H1 (cell line): ENCODE measurements at regions of chr2 and their contacts with region 1.

Region 1: GRCh38 chr2:191013932-191014652 is at the start of gene STAT1:
- DNase-seq: peak in 1 of 2 experiments; percentile 99
- H3K4me3 ChIP-seq: peak within 1 kb of the TSS; percentile 77 to 96 (median 90)
- H3K27ac ChIP-seq: peak within 1 kb of the TSS; percentile 61; the same call in 1 of the 2 replicates
- H3K4me1 ChIP-seq: peaks cover 0 to 6% (median 1%) of the 10 kb centered on the region in 4 experiments; a peak in 3 of 7 replicates
- H3K27me3 ChIP-seq: peaks cover 0 to 13% (median 6%) of the 10 kb centered on the region in 4 experiments; a peak in 4 of 7 replicates
- CTCF ChIP-seq: no peak
- EP300 ChIP-seq: peak; percentile 93 to 100; a peak in 2 of 3 replicates
- POLR2A ChIP-seq: peak; percentile 86 to 98
- RAD21 ChIP-seq: no peak; a peak in 1 of 4 replicates
- total RNA-seq, gene STAT1: 43.0 and 43.8 TPM in 2 replicates

Region 2: DNA sequence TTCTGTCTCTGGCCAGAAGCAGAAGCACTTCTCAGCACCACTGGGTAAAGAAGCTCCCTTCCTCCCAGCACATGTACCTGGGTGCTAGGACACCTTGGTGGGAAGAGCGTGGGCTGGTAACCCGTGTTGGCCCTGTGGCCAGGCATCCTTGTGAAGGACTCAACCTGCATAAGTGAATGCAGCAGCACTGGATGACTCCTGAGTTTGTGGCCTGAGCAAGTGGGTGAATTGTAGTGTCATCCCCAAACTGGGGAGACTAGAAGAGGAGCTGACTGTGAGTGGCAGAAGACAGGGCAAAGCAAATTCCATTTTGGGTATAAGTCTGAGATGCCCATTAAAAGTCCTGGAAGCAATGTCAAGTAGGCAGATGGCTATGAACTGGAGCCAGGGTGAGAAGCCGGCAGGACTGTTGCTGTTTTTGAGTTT is 63.5 kb before region 1 on chr2:
- CTCF ChIA-PET with region 1: no interaction called
- POLR2A ChIA-PET with region 1: no interaction called
- DNase-seq: no peak
- H3K4me3 ChIP-seq: no peak overlapping the region
- H3K27ac ChIP-seq: no peak overlapping the region
- H3K4me1 ChIP-seq: peaks cover 0 to 3% (median 1%) of the 10 kb centered on the region in 4 experiments; a peak in 2 of 7 replicates
- H3K27me3 ChIP-seq: peaks cover 0 to 1% (median 0%) of the 10 kb centered on the region in 4 experiments; a peak in 1 of 7 replicates
- CTCF ChIP-seq: no peak
- EP300 ChIP-seq: no peak
- POLR2A ChIP-seq: no peak
- RAD21 ChIP-seq: no peak

Region 3: DNA sequence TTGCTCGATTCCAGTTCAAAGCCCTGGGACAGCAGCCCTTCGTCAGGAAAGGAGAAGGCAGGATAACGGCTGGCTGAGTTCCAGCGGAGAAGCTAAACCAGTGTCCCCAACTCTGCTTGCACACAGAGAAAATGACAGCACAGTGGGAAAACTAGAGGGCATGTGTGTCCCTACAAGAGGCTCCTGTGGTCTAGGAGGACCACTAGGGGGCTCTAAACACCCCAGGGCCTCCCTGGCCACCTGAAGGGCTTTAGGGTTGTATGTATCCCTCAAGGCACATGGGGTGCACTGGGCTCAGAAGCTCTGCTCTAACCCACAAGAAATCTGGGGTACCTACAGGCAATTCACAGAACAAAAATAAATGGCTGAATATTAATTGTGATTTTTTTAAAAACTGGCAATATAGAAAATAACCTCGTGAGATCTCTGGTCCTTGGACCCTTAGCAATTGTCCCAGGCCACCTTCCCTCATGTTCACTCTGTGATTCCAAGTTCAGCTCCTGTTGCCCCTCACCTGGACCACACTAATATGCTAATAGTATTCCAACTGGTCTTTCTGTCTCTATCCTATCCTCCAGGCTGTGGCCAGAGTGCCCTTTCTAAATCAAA is 17.6 kb before region 1 on chr2:
- CTCF ChIA-PET with region 1: interaction called, 15 read pairs
- POLR2A ChIA-PET with region 1: no interaction called
- DNase-seq: peak in 1 of 2 experiments; percentile 50
- H3K4me3 ChIP-seq: no peak overlapping the region
- H3K27ac ChIP-seq: no peak overlapping the region
- H3K4me1 ChIP-seq: no peaks in the 10 kb centered on the region
- H3K27me3 ChIP-seq: no peaks in the 10 kb centered on the region
- CTCF ChIP-seq: peak; percentile 65 to 94 (median 80)
- EP300 ChIP-seq: no peak
- POLR2A ChIP-seq: no peak
- RAD21 ChIP-seq: peak; percentile 52 to 56

Region 4: GRCh38 chr2:191030521-191031154 is 16.5 kb after region 1 on chr2:
- CTCF ChIA-PET with region 1: interaction called, 15 read pairs
- POLR2A ChIA-PET with region 1: no interaction called
- DNase-seq: no peak
- H3K4me3 ChIP-seq: no peak overlapping the region
- H3K27ac ChIP-seq: no peak overlapping the region
- H3K4me1 ChIP-seq: peaks cover 0 to 3% (median 1%) of the 10 kb centered on the region in 4 experiments; a peak in 2 of 7 replicates
- H3K27me3 ChIP-seq: no peaks in the 10 kb centered on the region
- CTCF ChIP-seq: peak in 2 of 3 experiments; percentile 57 to 70; a peak in 3 of 4 replicates
- EP300 ChIP-seq: no peak
- POLR2A ChIP-seq: no peak
- RAD21 ChIP-seq: peak; percentile 56 to 62